MCF 10A (cell line): ENCODE measurements at regions of chrX and their contacts with region 1.

Region 1: GRCh38 chrX:19904778-19905367 is 17.5 kb upstream of the SH3KBP1 start:
- DNase-seq: peak; percentile 57
- H3K4me3 Mint-ChIP-seq: no peak overlapping the region
- H3K27ac Mint-ChIP-seq: no peak overlapping the region
- H3K4me1 Mint-ChIP-seq: no peaks in the 10 kb centered on the region
- H3K27me3 Mint-ChIP-seq: peaks cover 52% of the 10 kb centered on the region
- CTCF ChIP-seq: peak; percentile 60

Region 2: GRCh38 chrX:19350941-19351384 is 553.9 kb before region 1 on chrX:
- CTCF ChIA-PET with region 1: no interaction called
- POLR2A ChIA-PET with region 1: no interaction called
- intact Hi-C with region 1: no loop called
- DNase-seq: no peak
- H3K4me3 Mint-ChIP-seq: no peak overlapping the region
- H3K27ac Mint-ChIP-seq: no peak overlapping the region
- H3K4me1 Mint-ChIP-seq: peaks cover 6% of the 10 kb centered on the region
- H3K27me3 Mint-ChIP-seq: no peaks in the 10 kb centered on the region
- CTCF ChIP-seq: no peak

Region 3: GRCh38 chrX:19372170-19372546 is 532.7 kb before region 1 on chrX:
- CTCF ChIA-PET with region 1: interaction called, 3 read pairs
- POLR2A ChIA-PET with region 1: no interaction called
- intact Hi-C with region 1: loop called (anchors 5 kb)
- DNase-seq: peak; percentile 63
- H3K4me3 Mint-ChIP-seq: peak overlapping the region; percentile 79
- H3K27ac Mint-ChIP-seq: peak overlapping the region; percentile 35
- H3K4me1 Mint-ChIP-seq: no peaks in the 10 kb centered on the region
- H3K27me3 Mint-ChIP-seq: no peaks in the 10 kb centered on the region
- CTCF ChIP-seq: peak; percentile 59

Region 4: DNA sequence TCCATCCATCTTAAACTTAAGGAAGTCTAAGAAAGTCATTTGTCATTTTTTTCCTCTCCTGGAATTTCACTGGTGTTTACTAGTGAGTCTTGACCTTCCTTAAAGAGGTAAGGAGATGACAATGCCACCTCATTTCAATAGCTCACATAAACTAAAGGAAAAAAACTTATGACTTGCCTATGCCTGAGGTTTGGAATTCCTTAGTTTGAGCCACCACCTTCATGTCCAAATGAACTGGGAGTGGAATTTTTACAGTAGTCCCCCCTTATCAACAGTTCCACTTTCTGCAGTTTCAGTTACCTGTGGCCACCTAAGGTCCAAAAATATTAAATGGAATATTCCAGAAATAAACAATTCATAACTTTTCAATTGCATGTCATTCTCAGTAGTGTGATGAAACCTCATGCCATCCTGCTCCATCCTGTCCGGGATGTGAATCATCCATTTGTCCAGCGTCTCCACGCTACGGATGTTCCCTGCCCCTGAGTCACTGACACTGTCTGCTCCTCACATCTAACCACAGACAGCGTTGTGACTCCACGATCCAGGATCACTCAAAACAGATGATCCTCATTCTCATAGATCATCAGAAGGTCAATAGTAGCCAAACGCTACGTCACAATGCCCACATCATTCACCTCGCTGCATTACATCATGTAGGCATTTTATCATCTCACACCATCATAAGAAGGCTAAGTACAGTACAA is 194.9 kb before region 1 on chrX:
- CTCF ChIA-PET with region 1: no interaction called
- POLR2A ChIA-PET with region 1: no interaction called
- intact Hi-C with region 1: no loop called
- DNase-seq: peak; percentile 92
- H3K4me3 Mint-ChIP-seq: peak overlapping the region; percentile 7
- H3K27ac Mint-ChIP-seq: peak overlapping the region; percentile 82
- H3K4me1 Mint-ChIP-seq: peaks cover 12% of the 10 kb centered on the region
- H3K27me3 Mint-ChIP-seq: no peaks in the 10 kb centered on the region
- CTCF ChIP-seq: no peak

Region 5: GRCh38 chrX:19725641-19726040 is 179.2 kb before region 1 on chrX:
- CTCF ChIA-PET with region 1: no interaction called
- POLR2A ChIA-PET with region 1: no interaction called
- intact Hi-C with region 1: no loop called
- DNase-seq: peak; percentile 84
- H3K4me3 Mint-ChIP-seq: no peak overlapping the region
- H3K27ac Mint-ChIP-seq: peak overlapping the region; percentile 21
- H3K4me1 Mint-ChIP-seq: peaks cover 6% of the 10 kb centered on the region
- H3K27me3 Mint-ChIP-seq: peaks cover 27% of the 10 kb centered on the region
- CTCF ChIP-seq: no peak

Region 6: GRCh38 chrX:19990556-19991349 is 85.9 kb after region 1 on chrX and contains the start of gene BCLAF3:
- CTCF ChIA-PET with region 1: interaction called, 6 read pairs
- POLR2A ChIA-PET with region 1: interaction called, 3 read pairs
- intact Hi-C with region 1: loop called (anchors 1 kb)
- DNase-seq: peak; percentile 80
- H3K4me3 Mint-ChIP-seq: peak within 1 kb of the TSS; percentile 69
- H3K27ac Mint-ChIP-seq: peak within 1 kb of the TSS; percentile 1
- H3K4me1 Mint-ChIP-seq: peaks cover 7% of the 10 kb centered on the region
- H3K27me3 Mint-ChIP-seq: peaks cover 22% of the 10 kb centered on the region
- CTCF ChIP-seq: peak; percentile 70
- total RNA-seq, gene BCLAF3: 8.6 and 9.6 TPM in 2 replicates

Region 7: GRCh38 chrX:20128670-20129069 is 223.8 kb after region 1 on chrX:
- CTCF ChIA-PET with region 1: interaction called, 18 read pairs
- POLR2A ChIA-PET with region 1: interaction called, 3 read pairs
- intact Hi-C with region 1: no loop called
- DNase-seq: peak; percentile 39
- H3K4me3 Mint-ChIP-seq: no peak overlapping the region
- H3K27ac Mint-ChIP-seq: no peak overlapping the region
- H3K4me1 Mint-ChIP-seq: peaks cover 14% of the 10 kb centered on the region
- H3K27me3 Mint-ChIP-seq: no peaks in the 10 kb centered on the region
- CTCF ChIP-seq: no peak

Region 8: DNA sequence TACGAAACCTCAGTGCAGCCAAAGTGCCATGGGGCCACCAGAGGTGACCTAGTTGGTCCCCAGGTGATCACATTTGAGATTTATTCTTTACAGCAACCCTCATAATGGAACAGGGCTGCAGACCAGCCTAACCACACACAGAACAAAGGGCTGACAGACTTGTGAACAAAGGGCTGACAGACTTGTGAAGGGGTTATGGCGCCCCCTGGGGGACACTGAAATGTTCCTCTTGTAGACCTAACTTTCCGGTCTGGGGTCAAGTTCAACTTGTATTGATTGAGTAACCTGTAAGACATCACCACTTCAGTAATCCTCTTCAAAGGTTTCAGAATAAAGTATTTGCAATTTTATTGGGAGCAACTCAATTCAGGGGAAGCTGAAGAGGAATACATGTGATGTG is 537.7 kb after region 1 on chrX:
- CTCF ChIA-PET with region 1: no interaction called
- POLR2A ChIA-PET with region 1: no interaction called
- intact Hi-C with region 1: loop called (anchors 10 kb)
- DNase-seq: peak; percentile 82
- H3K4me3 Mint-ChIP-seq: no peak overlapping the region
- H3K27ac Mint-ChIP-seq: no peak overlapping the region
- H3K4me1 Mint-ChIP-seq: no peaks in the 10 kb centered on the region
- H3K27me3 Mint-ChIP-seq: peaks cover 21% of the 10 kb centered on the region
- CTCF ChIP-seq: peak; percentile 68